Activated CD4-positive, alpha-beta memory T cell treated with anti-CD3 and anti-CD28 coated beads, Interleukin-2, amount 10 ng/mL, durations not matched to agents 7 days and 5 days (primary cell): ENCODE measurements at regions of chr7 and their contacts with region 1.

Region 1: GRCh38 chr7:73851410-73852234 is 9.3 kb upstream of the METTL27 start:
- DNase-seq: peak; percentile 53
- H3K4me3 Mint-ChIP-seq: peak overlapping the region; percentile 18
- H3K27ac Mint-ChIP-seq: peak overlapping the region; percentile 90
- H3K4me1 Mint-ChIP-seq: peaks cover 47% of the 10 kb centered on the region
- H3K27me3 Mint-ChIP-seq: peaks cover 14% of the 10 kb centered on the region

Region 2: DNA sequence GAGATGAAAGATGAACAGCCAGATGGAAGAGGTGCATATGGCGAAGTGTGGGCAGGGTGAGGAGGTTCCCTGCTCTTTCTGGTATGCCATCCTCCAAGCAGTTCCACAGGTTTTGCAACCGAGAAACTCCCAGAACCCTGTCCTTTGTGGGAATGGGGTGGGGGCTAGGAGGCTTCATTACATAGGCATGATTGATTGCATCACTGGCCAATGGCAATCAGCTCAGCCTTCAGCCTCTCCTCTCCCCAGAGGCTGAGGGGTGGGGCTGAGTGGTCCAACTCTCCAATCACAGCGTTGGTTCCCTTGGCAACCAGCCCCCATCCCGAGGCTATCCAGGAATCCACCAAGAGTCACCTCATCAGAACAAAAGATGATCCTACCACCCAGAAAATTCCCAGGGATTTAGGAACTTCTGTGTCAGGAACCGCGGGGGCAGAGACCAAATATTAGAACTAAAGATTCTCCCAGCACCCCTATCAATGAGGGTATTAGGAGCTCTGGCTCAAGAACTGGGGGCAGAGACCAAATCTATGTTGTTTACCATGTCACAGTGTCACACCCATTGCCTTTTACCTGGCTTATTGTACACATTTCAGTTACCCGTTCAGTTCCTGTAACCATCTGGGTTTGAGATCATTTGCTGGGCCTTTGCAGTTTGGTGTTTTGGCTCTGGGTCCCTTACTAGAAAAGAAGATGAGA is 58.9 kb before region 1 on chr7:
- CTCF ChIA-PET with region 1: no interaction called
- POLR2A ChIA-PET with region 1: no interaction called
- DNase-seq: no peak
- H3K4me3 Mint-ChIP-seq: no peak overlapping the region
- H3K27ac Mint-ChIP-seq: no peak overlapping the region
- H3K4me1 Mint-ChIP-seq: no peaks in the 10 kb centered on the region
- H3K27me3 Mint-ChIP-seq: no peaks in the 10 kb centered on the region

Region 3: DNA sequence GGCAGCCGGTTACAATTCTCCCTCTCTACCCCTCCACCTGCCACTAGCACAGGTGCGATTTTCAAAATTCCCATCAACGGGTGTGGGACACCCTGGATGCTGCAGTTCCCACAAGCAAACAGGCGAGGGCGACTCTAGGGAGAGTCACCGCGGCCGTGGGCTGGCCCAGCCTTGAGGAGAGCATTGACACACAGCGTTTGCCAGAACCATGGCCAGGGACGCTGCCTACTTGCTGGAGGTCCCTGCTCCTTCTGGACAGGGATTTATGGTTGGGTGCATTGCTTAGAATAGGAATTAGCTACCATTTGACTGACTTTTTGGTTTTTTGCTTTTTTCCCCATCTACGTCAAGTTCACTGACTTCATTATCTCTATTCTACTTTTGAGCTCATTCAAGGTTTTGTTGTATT is 39.9 kb before region 1 on chr7:
- CTCF ChIA-PET with region 1: interaction called, 66 read pairs
- POLR2A ChIA-PET with region 1: no interaction called
- DNase-seq: peak; percentile 65
- H3K4me3 Mint-ChIP-seq: no peak overlapping the region
- H3K27ac Mint-ChIP-seq: no peak overlapping the region
- H3K4me1 Mint-ChIP-seq: no peaks in the 10 kb centered on the region
- H3K27me3 Mint-ChIP-seq: peaks cover 4% of the 10 kb centered on the region

Region 4: DNA sequence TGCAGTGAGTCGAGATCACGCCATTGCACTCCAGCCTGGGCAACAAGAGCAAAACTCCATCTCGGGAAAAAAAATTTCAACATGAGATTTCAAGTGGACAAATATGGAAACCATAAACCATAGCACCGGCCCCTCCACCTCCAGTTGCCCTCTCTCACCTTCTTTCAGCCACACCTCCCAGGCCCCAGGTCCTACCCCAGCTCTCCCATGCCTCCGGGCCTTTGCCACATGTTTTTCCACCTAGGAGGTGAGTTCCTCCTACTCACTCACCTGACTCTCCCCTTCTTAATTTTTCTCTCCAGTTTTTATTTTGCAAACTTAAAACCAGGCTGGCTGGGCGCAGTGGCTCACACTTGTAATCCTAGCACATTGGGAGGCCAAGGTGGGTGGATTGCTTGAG is 34.5 kb before region 1 on chr7:
- CTCF ChIA-PET with region 1: interaction called, 66 read pairs
- POLR2A ChIA-PET with region 1: no interaction called
- DNase-seq: no peak
- H3K4me3 Mint-ChIP-seq: no peak overlapping the region
- H3K27ac Mint-ChIP-seq: no peak overlapping the region
- H3K4me1 Mint-ChIP-seq: no peaks in the 10 kb centered on the region
- H3K27me3 Mint-ChIP-seq: peaks cover 8% of the 10 kb centered on the region

Region 5: GRCh38 chr7:73918926-73919693 is 67.5 kb after region 1 on chr7:
- CTCF ChIA-PET with region 1: no interaction called
- POLR2A ChIA-PET with region 1: no interaction called
- DNase-seq: no peak
- H3K4me3 Mint-ChIP-seq: no peak overlapping the region
- H3K27ac Mint-ChIP-seq: no peak overlapping the region
- H3K4me1 Mint-ChIP-seq: no peaks in the 10 kb centered on the region
- H3K27me3 Mint-ChIP-seq: peaks cover 7% of the 10 kb centered on the region